ENCODE measurements at regions of chr9 and their contacts with region 1.

Region 1: DNA sequence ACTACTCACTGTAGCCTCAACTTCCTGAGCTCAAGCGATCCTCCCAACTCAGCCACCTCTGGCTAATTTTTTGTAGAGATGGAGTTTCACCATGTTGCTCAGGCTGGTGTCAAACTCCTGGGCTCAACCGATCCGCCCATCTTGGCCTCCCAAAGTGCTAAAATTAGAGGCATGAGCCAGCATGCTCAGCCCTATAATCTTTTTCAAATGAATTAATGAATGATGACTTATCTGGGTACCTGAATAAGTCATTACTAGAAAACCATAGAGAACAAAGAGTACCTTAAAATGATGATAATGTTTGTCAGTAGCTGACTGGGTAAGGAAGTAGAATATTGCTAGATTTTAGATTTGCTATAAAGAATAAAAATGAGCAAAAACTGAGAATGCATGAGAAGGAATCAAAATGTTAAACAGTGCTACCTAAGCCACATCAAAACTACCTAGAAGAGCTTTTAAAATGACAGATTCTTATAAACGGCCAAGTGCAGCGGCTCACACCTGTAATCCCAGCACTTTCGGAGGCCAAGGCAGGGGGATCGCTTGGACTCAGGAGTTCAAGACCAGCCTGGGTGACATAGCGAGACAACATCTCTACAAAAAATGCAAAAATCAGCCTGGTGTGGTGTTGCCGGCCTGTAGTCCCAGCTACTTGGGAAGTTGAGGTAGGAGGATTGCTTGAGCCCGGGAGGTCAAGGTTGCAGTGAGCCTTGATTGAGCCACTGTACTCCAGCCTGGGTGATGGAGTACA is 13.6 kb downstream of the FNBP1 start:
- DNase-seq: peak; percentile 73
- ATAC-seq: peak; percentile 52
- H3K4me3 Mint-ChIP-seq: peak overlapping the region; percentile 56
- H3K27ac Mint-ChIP-seq: peak overlapping the region; percentile 99
- H3K4me1 Mint-ChIP-seq: peaks cover 89% of the 10 kb centered on the region
- H3K27me3 Mint-ChIP-seq: no peaks in the 10 kb centered on the region
- CTCF ChIP-seq: no peak

Region 2: GRCh38 chr9:129954868-129955550 is 74.4 kb before region 1 on chr9:
- CTCF ChIA-PET with region 1: interaction called, 3 read pairs
- POLR2A ChIA-PET with region 1: interaction called, 12 read pairs
- intact Hi-C with region 1: no loop called
- DNase-seq: no peak
- ATAC-seq: no peak
- H3K4me3 Mint-ChIP-seq: no peak overlapping the region
- H3K27ac Mint-ChIP-seq: peak overlapping the region; percentile 70
- H3K4me1 Mint-ChIP-seq: peaks cover 52% of the 10 kb centered on the region
- H3K27me3 Mint-ChIP-seq: no peaks in the 10 kb centered on the region
- CTCF ChIP-seq: no peak

Region 3: GRCh38 chr9:129988607-129989361 is 40.6 kb before region 1 on chr9:
- CTCF ChIA-PET with region 1: interaction called, 4 read pairs
- POLR2A ChIA-PET with region 1: interaction called, 29 read pairs
- intact Hi-C with region 1: no loop called
- DNase-seq: peak; percentile 42
- ATAC-seq: peak; percentile 51
- H3K4me3 Mint-ChIP-seq: peak overlapping the region; percentile 31
- H3K27ac Mint-ChIP-seq: peak overlapping the region; percentile 93
- H3K4me1 Mint-ChIP-seq: peaks cover 75% of the 10 kb centered on the region
- H3K27me3 Mint-ChIP-seq: no peaks in the 10 kb centered on the region
- CTCF ChIP-seq: no peak

Region 4: DNA sequence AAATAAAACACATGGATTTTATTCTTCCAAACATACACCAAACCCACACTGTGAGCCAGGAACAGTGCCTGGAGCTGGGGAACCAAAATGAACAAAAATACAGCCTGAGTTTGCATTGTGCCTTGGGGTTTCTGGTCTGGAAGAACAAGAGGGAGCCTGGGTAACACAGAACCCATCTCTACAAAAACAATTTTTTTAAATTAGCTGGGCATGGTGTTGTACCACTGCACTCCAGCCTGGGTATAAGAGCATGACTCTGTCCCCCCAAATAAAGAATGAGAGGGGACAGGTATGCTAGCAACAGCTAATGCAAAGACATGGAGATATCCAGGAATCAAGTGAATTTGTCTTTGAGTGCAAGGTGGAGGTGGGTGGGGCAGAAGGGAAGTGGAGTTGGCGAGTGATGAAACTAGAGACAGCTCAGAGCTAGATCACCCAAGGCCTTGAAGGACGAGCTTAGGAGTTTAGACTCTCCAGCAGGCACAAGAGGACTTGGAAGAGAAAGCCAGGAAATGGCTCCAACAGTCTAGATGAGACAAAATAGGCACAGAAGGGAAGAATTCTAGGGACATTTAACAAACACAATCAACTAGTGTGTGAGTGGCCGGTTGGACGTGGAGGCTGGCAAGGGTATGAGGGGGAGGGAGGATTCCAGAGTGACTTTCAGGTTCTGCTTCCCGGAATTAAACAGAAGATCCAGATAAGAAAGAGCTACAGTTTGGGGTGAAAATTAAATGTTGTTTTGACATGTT is 33.8 kb before region 1 on chr9:
- CTCF ChIA-PET with region 1: interaction called, 5 read pairs
- POLR2A ChIA-PET with region 1: interaction called, 29 read pairs
- intact Hi-C with region 1: no loop called
- DNase-seq: peak; percentile 65
- ATAC-seq: peak; percentile 44
- H3K4me3 Mint-ChIP-seq: peak overlapping the region; percentile 57
- H3K27ac Mint-ChIP-seq: peak overlapping the region; percentile 97
- H3K4me1 Mint-ChIP-seq: peaks cover 70% of the 10 kb centered on the region
- H3K27me3 Mint-ChIP-seq: no peaks in the 10 kb centered on the region
- CTCF ChIP-seq: no peak

Region 5: DNA sequence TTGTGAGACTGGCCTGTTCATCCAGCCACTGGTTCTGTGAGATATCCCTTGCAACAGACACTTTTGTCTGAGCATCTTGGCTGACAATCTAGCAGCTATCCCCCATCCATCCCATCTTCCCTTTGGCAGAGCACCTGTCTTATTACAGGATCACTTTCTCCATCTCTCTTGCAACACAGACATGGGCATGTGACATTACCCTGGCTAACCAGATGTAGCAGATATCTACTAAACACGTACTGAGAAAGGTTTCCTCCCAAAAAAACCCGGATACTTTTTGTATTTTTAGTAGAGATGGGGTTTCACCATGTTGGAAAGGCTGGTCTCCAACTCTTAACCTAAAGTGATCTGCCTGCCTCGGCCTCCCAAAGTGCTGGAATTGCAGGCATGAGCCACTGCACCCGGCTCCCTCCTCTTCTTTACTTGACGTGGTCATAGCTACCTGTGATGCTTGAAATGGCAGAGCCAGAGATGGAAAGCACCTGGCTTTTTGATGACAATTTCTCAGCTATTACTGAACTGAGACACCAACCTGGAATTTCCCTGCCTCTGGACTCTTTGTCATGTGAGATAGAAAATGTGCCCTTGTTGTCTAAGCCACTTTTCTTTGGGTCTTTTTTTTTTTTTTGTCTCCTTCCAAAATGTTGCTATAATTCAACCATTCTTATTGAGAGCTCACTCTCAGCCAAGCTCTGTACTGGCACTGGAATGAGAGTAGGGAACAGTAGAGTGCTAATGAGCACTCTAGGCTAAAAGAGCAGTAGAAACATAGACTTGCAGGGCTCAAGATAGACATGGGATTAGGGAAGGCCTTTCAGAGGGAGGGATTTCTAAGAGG is 19.0 kb before region 1 on chr9:
- CTCF ChIA-PET with region 1: interaction called, 5 read pairs
- POLR2A ChIA-PET with region 1: interaction called, 16 read pairs
- intact Hi-C with region 1: no loop called
- DNase-seq: peak; percentile 63
- ATAC-seq: peak; percentile 71
- H3K4me3 Mint-ChIP-seq: peak overlapping the region; percentile 12
- H3K27ac Mint-ChIP-seq: peak overlapping the region; percentile 91
- H3K4me1 Mint-ChIP-seq: peaks cover 80% of the 10 kb centered on the region
- H3K27me3 Mint-ChIP-seq: no peaks in the 10 kb centered on the region
- CTCF ChIP-seq: no peak

Region 6: GRCh38 chr9:130018260-130018659 is 11.1 kb before region 1 on chr9:
- CTCF ChIA-PET with region 1: interaction called, 8 read pairs
- POLR2A ChIA-PET with region 1: interaction called, 23 read pairs
- intact Hi-C with region 1: no loop called
- DNase-seq: peak; percentile 44
- ATAC-seq: no peak
- H3K4me3 Mint-ChIP-seq: no peak overlapping the region
- H3K27ac Mint-ChIP-seq: peak overlapping the region; percentile 95
- H3K4me1 Mint-ChIP-seq: peaks cover 75% of the 10 kb centered on the region
- H3K27me3 Mint-ChIP-seq: no peaks in the 10 kb centered on the region
- CTCF ChIP-seq: no peak

Region 7: DNA sequence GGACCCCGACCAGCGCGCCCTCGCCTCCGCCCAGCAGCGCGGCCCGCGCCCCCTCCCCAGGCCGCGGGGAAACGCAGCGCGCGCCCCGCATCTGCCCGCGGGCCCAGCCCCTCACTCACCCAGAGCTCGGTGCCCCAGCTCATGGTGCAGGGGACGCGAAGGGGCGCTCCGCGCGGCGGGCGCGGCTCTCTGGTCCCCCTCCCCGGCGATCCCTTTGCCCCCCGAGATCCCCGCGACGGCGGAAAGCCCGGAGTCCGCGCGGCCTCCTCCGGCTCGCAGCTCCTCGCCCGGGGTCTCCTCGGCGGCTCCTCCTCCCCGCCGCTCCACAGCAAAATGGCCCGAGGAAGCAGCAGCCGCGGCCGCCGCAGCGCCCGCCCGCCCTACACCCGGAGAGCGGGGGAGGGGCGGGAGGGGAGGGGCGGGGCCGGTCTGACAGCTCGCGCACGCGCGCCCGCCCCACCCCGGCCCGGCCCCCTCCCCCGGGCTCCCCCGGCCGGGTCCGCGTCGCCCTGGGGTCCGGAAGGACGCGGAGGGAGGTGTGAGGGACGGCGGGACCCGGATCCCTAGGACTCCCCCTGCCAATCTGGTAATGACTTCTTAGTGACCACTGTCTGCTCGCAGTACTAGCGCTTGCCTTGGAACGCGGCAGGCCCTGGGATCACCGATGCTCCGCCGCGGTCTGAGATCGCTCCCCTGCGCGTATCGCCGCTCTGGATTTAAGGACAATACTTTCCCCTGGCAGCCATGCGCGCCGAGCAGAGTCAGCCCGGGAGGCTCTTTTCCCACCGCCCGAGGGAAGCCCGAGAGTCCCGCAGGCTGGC is 13.6 kb after region 1 on chr9 and contains the start of gene FNBP1:
- CTCF ChIA-PET with region 1: interaction called, 10 read pairs
- POLR2A ChIA-PET with region 1: interaction called, 104 read pairs
- intact Hi-C with region 1: no loop called
- DNase-seq: peak; percentile 81
- ATAC-seq: peak; percentile 72
- H3K4me3 Mint-ChIP-seq: peak within 1 kb of the TSS; percentile 97
- H3K27ac Mint-ChIP-seq: peak within 1 kb of the TSS; percentile 100
- H3K4me1 Mint-ChIP-seq: peaks cover 30% of the 10 kb centered on the region
- H3K27me3 Mint-ChIP-seq: no peaks in the 10 kb centered on the region
- CTCF ChIP-seq: no peak
- total RNA-seq, gene FNBP1: 266 to 268 TPM

Region 8: DNA sequence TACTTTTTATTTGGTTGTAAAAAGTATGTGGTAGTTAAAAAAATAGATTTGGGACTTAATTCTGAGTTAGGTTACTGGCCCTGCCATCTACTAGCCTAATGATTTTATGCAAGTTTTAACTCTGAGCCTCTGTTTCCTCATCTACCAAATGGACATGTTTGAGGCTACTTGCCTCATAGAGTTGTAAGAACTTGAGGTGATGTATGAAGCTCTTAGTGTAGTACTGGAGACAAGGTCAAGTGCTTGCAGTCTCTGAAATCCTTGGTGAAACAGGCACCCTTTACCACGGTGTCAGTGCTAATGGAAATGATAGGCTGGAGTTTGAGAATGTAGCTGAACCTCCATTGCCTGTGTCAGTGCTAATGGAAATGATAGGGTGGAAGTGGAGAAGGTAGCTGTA is 39.6 kb after region 1 on chr9:
- CTCF ChIA-PET with region 1: no interaction called
- POLR2A ChIA-PET with region 1: no interaction called
- intact Hi-C with region 1: no loop called
- DNase-seq: no peak
- ATAC-seq: peak; percentile 20
- H3K4me3 Mint-ChIP-seq: no peak overlapping the region
- H3K27ac Mint-ChIP-seq: peak overlapping the region; percentile 61
- H3K4me1 Mint-ChIP-seq: peaks cover 30% of the 10 kb centered on the region
- H3K27me3 Mint-ChIP-seq: no peaks in the 10 kb centered on the region
- CTCF ChIP-seq: no peak

Region 9: DNA sequence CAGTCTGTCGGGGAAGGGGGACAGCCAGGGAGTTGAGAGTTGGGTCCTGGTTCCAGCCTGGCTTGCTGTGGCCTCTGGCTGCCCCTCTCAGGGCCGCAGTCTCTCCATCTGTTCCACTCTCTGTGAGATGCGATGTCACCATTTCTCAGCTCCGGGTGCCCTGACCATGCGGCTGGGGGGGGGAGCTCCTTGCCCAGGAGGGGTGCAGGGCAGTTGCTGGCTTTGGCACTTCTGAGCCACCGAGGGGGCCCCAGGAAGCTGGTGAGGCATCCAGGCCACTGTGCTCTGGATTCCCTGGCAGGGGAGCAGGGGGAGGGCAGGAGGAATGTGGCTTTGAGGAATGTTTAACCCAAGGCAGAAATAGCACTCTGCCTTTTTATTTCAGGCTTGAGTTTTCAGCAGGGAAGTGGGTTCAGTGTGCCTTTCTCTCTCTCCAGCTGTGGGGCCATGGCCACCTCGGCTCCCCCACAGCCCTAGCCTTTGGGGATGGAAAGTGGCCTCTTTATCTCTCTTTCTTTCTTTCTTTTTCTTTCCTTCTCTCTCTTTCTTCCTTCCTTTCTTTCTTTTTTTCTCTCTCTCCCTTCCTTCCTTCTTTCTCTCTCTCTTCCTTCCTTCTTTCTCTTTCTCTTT is 153.8 kb after region 1 on chr9:
- CTCF ChIA-PET with region 1: no interaction called
- POLR2A ChIA-PET with region 1: no interaction called
- intact Hi-C with region 1: no loop called
- DNase-seq: no peak
- ATAC-seq: no peak
- H3K4me3 Mint-ChIP-seq: no peak overlapping the region
- H3K27ac Mint-ChIP-seq: no peak overlapping the region
- H3K4me1 Mint-ChIP-seq: no peaks in the 10 kb centered on the region
- H3K27me3 Mint-ChIP-seq: no peaks in the 10 kb centered on the region
- CTCF ChIP-seq: no peak

Region 10: GRCh38 chr9:130235897-130236668 is 206.7 kb after region 1 on chr9:
- CTCF ChIA-PET with region 1: no interaction called
- POLR2A ChIA-PET with region 1: no interaction called
- intact Hi-C with region 1: no loop called
- DNase-seq: peak; percentile 80
- ATAC-seq: no peak
- H3K4me3 Mint-ChIP-seq: no peak overlapping the region
- H3K27ac Mint-ChIP-seq: no peak overlapping the region
- H3K4me1 Mint-ChIP-seq: peaks cover 26% of the 10 kb centered on the region
- H3K27me3 Mint-ChIP-seq: no peaks in the 10 kb centered on the region
- CTCF ChIP-seq: peak; percentile 98